Mammary epithelial cell (primary cell): ENCODE measurements at regions of chr22 and their contacts with region 1.

Region 1: DNA sequence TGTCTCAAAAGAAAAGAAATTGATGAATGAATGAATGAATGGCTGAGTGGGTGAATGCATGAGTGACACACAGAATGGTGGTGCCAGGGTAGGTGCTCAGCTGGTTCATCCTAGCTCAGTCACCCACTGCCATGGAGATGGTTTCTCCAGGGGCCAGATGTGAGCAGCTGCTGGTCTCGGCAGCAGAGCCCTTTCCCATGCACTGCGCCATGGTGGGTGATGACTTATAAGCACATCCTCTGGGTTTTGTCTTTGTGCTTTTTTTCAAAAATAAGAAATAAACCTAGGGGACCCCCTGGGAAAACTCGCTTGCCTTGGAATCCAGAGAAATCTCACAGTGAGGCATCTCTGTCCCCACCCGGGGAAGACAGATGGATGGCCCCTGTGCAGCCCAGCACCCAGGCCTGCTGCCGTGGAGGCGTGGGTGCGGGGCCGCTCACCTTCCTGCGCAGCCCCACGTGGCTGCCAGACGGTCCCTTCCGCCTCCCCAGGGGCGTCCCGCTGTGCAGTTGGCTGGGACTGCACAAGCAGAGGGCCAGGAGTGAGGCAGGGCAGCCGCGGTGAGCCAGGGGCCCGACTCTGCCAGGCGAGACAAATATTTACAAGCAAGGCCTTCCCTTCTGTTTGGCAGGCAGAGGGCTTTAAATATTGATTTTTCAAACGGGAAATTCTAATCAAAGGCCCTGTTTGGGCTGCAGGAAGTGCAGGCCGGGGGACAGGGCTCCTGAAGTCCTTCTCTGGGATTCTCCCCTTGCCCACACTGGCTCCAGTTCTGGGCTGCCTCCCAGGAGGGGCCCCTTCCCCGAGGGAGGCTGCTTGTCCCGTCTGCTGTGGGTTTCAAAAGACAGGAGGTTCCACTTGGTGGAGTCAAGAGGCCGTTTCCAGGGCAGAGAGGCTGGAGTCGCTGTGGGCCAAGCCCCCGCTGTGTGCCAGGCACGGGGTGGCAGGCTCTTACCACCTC is 24.3 kb downstream of the MPPED1 start:
- DNase-seq: no peak
- H3K4me3 ChIP-seq: no peak overlapping the region
- H3K27ac ChIP-seq: no peak overlapping the region
- H3K4me1 ChIP-seq: no peaks in the 10 kb centered on the region
- H3K27me3 ChIP-seq: peaks cover 12% of the 10 kb centered on the region
- CTCF ChIP-seq: no peak

Region 2: DNA sequence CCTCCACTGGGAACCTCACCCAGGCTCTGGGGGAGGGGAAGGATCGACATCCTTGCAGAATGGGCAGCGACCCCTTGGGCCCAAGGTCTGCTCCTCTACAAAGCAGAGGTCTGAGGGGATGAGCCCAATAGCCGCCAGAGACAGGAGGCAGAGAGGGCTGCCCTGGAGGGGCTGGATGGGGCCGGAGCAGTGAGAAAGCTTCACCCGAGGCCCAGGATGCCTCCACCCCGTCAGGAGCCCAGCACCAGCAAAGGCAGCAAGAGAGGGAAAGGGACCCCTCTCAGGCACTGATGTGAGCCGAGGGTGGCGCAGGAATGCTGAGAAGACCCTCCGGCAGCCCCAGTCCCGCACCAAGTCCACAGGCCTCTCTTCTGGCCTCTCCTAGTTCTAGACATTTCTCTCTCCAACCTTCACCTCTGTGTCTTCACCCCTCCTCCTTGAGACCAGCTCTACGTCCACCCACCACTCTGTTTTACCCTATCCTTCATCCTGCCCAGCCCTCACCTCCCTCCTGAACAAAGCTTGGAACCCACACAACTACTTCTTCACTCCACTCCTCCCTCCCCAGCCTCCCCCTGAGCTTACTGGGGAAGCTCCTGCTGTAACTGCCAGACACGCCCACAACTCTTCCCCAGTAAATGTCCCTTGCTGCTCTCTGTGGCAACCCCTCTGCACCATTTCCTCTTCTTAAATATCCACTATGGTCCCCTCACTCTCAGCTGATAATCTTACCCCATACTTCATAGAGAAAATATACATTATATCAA is 107.6 kb after region 1 on chr22:
- CTCF ChIA-PET with region 1: no interaction called
- dilution Hi-C with region 1: loop called (anchors 10 kb)
- in situ Hi-C with region 1: no loop called
- intact Hi-C with region 1: no loop called
- DNase-seq: no peak
- H3K4me3 ChIP-seq: no peak overlapping the region
- H3K27ac ChIP-seq: no peak overlapping the region
- H3K4me1 ChIP-seq: no peaks in the 10 kb centered on the region
- H3K27me3 ChIP-seq: no peaks in the 10 kb centered on the region
- CTCF ChIP-seq: no peak